ENCODE measurements at regions of chr1 and their contacts with region 1.

Region 1: DNA sequence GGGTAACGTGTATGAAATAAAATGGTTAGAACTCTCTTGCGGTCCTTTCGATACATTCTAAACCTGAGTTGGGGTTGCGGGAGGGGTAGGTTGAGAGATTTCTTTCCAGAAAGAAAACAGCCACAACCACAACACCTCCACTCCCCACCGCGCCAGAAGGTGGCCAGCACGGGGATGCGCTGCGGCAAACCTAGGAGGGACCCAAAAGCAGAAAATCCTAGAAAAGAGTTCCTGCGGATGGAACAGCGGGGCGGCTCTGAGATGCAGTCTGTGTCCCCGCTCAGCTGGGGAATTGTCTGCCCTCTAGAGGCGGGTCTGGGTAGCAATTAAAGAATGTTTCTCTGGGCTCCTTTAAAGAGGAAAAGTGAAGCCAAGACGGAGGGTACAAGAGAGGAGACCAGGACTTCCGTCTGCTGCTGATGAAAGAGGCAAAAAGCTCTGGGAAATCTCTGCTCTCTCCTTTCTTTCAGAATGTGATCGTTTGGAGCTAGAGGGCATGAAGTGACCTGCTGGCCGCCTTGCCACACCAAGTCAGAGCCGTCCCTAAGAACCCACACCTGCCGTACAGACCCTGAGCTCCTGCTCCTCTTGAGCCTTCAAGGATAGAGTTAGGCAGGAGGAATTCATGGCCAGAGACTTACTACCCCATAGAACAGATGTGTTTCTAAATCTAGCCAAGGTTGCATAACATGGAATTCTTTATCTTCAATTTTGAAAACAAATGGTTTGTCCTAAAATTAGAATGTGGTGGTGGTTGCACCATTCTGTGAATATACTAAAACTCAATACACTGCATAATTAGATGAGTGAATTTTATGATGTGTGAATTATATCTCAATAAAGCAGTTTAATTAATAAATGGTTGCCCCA is 46.5 kb upstream of the COA6 start:
- DNase-seq: no peak
- ATAC-seq: peak; percentile 92
- H3K4me3 ChIP-seq: no peak overlapping the region
- H3K27ac ChIP-seq: no peak overlapping the region
- H3K4me1 ChIP-seq: peaks cover 5% of the 10 kb centered on the region
- H3K27me3 ChIP-seq: no peaks in the 10 kb centered on the region
- CTCF ChIP-seq: peak; percentile 77 to 87 (median 86)
- EP300 ChIP-seq: no peak
- POLR2A ChIP-seq: no peak
- RAD21 ChIP-seq: peak; percentile 76

Region 2: DNA sequence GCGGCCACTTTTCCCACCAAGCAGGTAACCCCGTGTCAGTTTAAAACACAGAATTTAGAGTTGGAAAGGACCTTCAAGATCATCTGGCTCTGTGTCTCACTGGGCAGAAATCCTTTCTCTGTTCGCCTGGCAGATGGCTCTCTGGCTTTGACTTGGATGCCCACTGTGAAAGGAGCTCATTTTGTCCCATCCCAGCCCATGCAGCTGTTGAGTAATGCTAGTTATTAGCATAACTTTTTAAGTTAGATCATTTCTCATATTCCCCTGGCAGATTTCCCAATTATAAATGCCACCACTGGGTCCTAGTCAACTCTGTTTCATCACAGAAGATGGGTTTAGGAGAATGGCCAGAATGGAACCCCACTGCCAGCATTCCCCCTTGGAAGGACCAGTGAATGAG is 366.3 kb before region 1 on chr1:
- CTCF ChIA-PET with region 1: no interaction called
- POLR2A ChIA-PET with region 1: no interaction called
- RAD21 ChIA-PET with region 1: no interaction called
- SMC1A ChIA-PET with region 1: no interaction called
- in situ Hi-C with region 1: no loop called
- intact Hi-C with region 1: no loop called
- DNase-seq: no peak
- ATAC-seq: no peak
- H3K4me3 ChIP-seq: no peak overlapping the region
- H3K27ac ChIP-seq: no peak overlapping the region
- H3K4me1 ChIP-seq: no peaks in the 10 kb centered on the region
- H3K27me3 ChIP-seq: no peaks in the 10 kb centered on the region
- CTCF ChIP-seq: no peak
- EP300 ChIP-seq: no peak
- POLR2A ChIP-seq: no peak
- RAD21 ChIP-seq: no peak

Region 3: DNA sequence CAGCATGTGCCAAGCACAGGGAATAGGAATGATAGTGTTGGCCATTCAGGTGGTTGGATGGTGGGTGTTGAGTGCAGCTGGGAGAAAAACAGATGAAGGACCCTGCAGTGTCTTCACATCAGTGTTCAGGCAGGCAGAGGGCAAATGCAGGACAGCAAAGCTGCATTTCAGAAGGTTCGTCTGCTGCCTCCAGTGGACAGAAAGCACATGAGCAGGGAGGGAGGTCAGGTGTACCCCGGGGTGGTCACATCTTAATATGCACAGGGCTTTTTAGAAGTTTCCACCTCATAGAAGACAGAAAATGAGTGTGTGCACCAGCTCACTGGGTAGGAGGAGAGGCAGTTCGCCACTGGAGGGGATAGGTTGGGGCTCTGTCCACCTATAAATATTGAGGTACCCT is 237.3 kb before region 1 on chr1:
- CTCF ChIA-PET with region 1: no interaction called
- POLR2A ChIA-PET with region 1: no interaction called
- RAD21 ChIA-PET with region 1: no interaction called
- SMC1A ChIA-PET with region 1: no interaction called
- in situ Hi-C with region 1: no loop called
- intact Hi-C with region 1: no loop called
- DNase-seq: no peak
- ATAC-seq: peak; percentile 63; the same call in 2 of the 3 replicates
- H3K4me3 ChIP-seq: no peak overlapping the region
- H3K27ac ChIP-seq: no peak overlapping the region
- H3K4me1 ChIP-seq: no peaks in the 10 kb centered on the region
- H3K27me3 ChIP-seq: no peaks in the 10 kb centered on the region; a peak in 1 of 4 replicates
- CTCF ChIP-seq: peak; percentile 0 to 35 (median 30); a peak in 3 of 6 replicates
- EP300 ChIP-seq: no peak
- POLR2A ChIP-seq: no peak
- RAD21 ChIP-seq: no peak

Region 4: DNA sequence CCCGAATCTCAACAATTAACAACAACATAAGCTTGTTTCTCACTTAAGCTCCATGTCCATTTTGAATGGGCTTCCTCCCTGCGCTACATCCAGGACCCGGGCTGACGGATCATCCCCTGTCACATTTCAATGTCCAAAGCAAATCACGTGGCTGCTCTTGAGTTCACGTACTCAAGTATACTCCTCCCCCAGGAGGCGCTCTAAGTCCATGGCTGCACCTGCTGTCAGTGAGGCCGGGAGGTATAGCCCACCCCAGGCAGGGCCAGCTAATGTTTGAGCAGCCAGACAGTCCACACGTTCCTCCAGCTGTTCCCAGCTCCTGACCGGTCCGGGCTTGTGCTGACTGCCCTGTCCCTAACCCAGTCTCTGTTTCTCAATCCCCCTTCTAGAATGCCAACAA is 201.4 kb before region 1 on chr1:
- CTCF ChIA-PET with region 1: interaction called, 6 read pairs
- POLR2A ChIA-PET with region 1: no interaction called
- RAD21 ChIA-PET with region 1: no interaction called
- SMC1A ChIA-PET with region 1: interaction called, 3 read pairs
- in situ Hi-C with region 1: no loop called
- intact Hi-C with region 1: loop called (anchors 2 kb)
- DNase-seq: no peak
- ATAC-seq: peak; percentile 98
- H3K4me3 ChIP-seq: no peak overlapping the region
- H3K27ac ChIP-seq: no peak overlapping the region
- H3K4me1 ChIP-seq: no peaks in the 10 kb centered on the region
- H3K27me3 ChIP-seq: peaks cover 0 to 7% of the 10 kb centered on the region in 2 experiments; a peak in 2 of 4 replicates
- CTCF ChIP-seq: peak; percentile 56 to 63 (median 59); a peak in 5 of 6 replicates
- EP300 ChIP-seq: no peak
- POLR2A ChIP-seq: no peak
- RAD21 ChIP-seq: peak; percentile 61

Region 5: GRCh38 chr1:234154320-234155251 is 172.1 kb before region 1 on chr1:
- CTCF ChIA-PET with region 1: interaction called, 5 read pairs
- POLR2A ChIA-PET with region 1: no interaction called
- RAD21 ChIA-PET with region 1: no interaction called
- SMC1A ChIA-PET with region 1: interaction called, 5 read pairs
- in situ Hi-C with region 1: no loop called
- intact Hi-C with region 1: loop called (anchors 1 kb)
- DNase-seq: peak; percentile 20
- ATAC-seq: peak; percentile 86
- H3K4me3 ChIP-seq: no peak overlapping the region
- H3K27ac ChIP-seq: no peak overlapping the region
- H3K4me1 ChIP-seq: no peaks in the 10 kb centered on the region
- H3K27me3 ChIP-seq: no peaks in the 10 kb centered on the region; a peak in 1 of 4 replicates
- CTCF ChIP-seq: peak; percentile 70 to 76 (median 71)
- EP300 ChIP-seq: no peak
- POLR2A ChIP-seq: no peak
- RAD21 ChIP-seq: peak; percentile 88

Region 6: DNA sequence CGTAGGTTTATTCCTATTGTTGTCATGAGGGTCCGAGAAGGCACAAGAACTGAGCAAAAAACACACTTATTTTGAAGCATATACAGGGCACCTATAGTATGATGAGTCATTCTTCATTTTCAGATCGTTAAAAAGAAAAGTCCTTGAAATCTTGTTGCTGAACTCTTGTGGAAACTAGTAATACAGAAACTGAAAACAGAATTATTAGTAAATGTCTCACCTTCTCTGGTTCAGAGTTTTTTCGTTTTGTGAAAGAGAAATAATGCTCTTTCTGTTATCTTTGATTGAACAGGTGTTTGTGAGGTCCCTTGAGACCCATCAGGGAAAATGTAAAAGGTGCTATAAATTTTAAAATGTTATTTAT is 55.5 kb before region 1 on chr1:
- CTCF ChIA-PET with region 1: no interaction called
- POLR2A ChIA-PET with region 1: no interaction called
- RAD21 ChIA-PET with region 1: no interaction called
- SMC1A ChIA-PET with region 1: no interaction called
- in situ Hi-C with region 1: no loop called
- intact Hi-C with region 1: no loop called
- DNase-seq: peak; percentile 89
- ATAC-seq: peak; percentile 96
- H3K4me3 ChIP-seq: no peak overlapping the region
- H3K27ac ChIP-seq: peak overlapping the region; percentile 90
- H3K4me1 ChIP-seq: peaks cover 20% of the 10 kb centered on the region
- H3K27me3 ChIP-seq: no peaks in the 10 kb centered on the region
- CTCF ChIP-seq: no peak
- EP300 ChIP-seq: peak; percentile 97 to 99
- POLR2A ChIP-seq: no peak
- RAD21 ChIP-seq: no peak

Measured in GM12878 (cell line).